Activated CD4-positive, alpha-beta memory T cell treated with anti-CD3 and anti-CD28 coated beads for 36 hours (primary cell): ENCODE measurements at regions of chr1 and their contacts with region 1.

Region 1: GRCh38 chr1:207015791-207016190 is 16.8 kb downstream of the C1orf116 start:
- DNase-seq: no peak
- H3K4me3 Mint-ChIP-seq: no peak overlapping the region
- H3K27ac Mint-ChIP-seq: no peak overlapping the region
- H3K4me1 Mint-ChIP-seq: no peaks in the 10 kb centered on the region
- H3K27me3 Mint-ChIP-seq: peaks cover 22% of the 10 kb centered on the region

Region 2: GRCh38 chr1:207004981-207005830 is 10.6 kb before region 1 on chr1:
- CTCF ChIA-PET with region 1: interaction called, 10 read pairs
- POLR2A ChIA-PET with region 1: no interaction called
- intact Hi-C with region 1: no loop called
- DNase-seq: peak; percentile 51
- H3K4me3 Mint-ChIP-seq: no peak overlapping the region
- H3K27ac Mint-ChIP-seq: no peak overlapping the region
- H3K4me1 Mint-ChIP-seq: peaks cover 2% of the 10 kb centered on the region
- H3K27me3 Mint-ChIP-seq: peaks cover 7% of the 10 kb centered on the region